Aorta (tissue), 5 donors: ENCODE measurements at regions of chr19 and their contacts with region 1.

Region 1: DNA sequence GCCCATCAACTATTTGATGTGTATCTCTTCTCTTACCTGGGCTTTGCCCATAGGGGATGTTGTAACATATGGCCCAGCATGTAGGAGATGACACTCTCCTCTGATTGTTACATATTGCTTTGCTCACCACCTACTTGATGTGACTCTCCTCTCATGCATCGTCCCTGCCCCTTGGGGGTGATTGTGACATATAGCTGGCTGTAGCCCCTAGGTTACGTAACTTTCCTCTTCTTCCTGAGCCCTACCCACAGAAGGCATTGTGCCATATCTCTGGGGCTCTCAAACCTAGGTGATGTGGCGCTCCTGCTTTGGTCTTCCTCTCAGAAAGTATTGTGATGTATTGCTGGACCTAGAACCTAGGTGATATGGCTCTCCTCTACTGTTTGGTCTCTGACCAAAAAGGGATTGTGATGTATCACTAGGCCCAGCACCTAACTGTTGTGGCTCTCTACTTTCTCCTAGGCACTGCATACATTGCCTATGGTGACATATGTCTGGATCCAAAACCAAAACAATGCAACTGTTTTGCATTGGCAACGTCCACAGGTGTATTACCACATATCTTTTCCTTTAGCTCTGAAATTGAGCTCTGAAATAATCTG is 71.9 kb upstream of the ZNF724 start:
- DNase-seq: no peak
- ATAC-seq: no peak
- H3K4me3 ChIP-seq: no peak overlapping the region
- H3K27ac ChIP-seq: no peak overlapping the region
- H3K4me1 ChIP-seq: no peaks in the 10 kb centered on the region
- H3K27me3 ChIP-seq: no peaks in the 10 kb centered on the region

Region 2: DNA sequence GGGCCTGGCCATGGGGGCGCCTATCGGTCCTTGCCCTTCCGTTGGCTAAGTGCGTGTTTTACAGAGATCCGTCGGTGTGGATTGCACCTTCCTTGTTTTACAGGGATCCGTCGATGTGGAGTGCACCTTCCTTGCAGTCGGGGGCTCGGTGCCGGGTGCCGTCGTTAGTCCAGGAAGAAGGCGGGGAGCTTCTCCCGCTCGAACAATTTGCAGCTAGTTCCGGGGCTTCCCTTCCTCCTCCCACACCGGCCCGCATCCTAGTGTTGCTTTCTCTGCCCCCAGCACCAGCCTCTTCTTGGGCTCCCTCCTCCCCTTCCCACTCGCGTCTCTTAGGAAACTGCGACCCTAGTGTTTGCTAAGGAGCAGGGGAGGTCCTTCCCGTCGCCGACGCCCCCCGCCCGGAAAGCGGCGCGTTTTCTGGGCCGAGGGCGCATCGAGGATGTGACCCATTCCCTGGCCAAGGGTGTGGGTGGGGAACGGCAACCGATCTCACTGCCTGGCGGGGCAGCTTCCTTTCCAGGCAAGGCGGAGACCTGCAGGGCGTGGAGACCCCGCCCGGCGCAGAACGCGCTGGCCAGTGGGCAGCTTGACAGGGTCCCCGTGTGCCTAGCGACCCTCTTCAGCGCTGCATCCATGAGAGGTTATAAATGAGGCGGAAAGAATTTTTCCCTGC is 149.0 kb after region 1 on chr19:
- intact Hi-C with region 1: loop called (anchors 2 to 5 kb)
- DNase-seq: no peak
- ATAC-seq: no peak
- H3K4me3 ChIP-seq: no peak overlapping the region
- H3K27ac ChIP-seq: no peak overlapping the region
- H3K4me1 ChIP-seq: no peaks in the 10 kb centered on the region
- H3K27me3 ChIP-seq: peaks cover 0 to 2% of the 10 kb centered on the region in 2 donors